SK-N-SH (cell line): ENCODE measurements at regions of chr3 and their contacts with region 1.

Region 1: DNA sequence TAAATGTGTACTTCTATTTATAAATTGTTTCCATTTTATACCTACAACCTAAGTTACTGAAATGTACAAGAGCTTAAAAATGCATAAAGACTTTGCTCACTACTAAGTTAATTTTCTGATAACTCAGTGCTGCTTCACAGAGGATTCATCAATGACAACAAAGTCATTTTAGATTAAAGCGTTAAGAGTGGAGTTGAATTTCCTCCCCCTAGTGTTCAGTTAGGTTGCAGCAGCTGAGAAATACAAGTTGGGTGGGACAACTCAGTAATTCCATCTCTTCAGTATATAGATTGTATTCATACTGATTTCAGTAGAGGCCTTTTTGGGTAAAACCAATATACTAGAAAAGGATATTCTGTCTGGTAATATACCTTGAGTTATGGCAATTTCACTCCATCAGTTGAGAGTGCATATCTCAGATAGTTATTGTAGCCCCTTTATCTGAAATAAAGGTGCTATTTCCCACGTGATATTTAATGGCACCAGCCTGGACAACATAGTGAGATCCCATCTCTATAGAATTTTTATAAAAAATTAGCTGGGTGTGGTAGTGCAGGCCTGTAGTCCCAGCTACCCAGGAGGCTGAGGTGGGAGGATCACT is 6.9 kb upstream of the RPL35A start:
- DNase-seq: peak; percentile 65
- H3K4me3 ChIP-seq: no peak overlapping the region; a peak in 1 of 4 replicates
- H3K27ac ChIP-seq: no peak overlapping the region
- H3K4me1 ChIP-seq: no peaks in the 10 kb centered on the region
- H3K27me3 ChIP-seq: no peaks in the 10 kb centered on the region
- CTCF ChIP-seq: peak; percentile 85
- EP300 ChIP-seq: no peak
- RAD21 ChIP-seq: peak; percentile 61

Region 2: GRCh38 chr3:197889204-197889930 is 53.7 kb before region 1 on chr3:
- CTCF ChIA-PET with region 1: interaction called, 14 read pairs
- POLR2A ChIA-PET with region 1: no interaction called
- DNase-seq: no peak
- H3K4me3 ChIP-seq: no peak overlapping the region
- H3K27ac ChIP-seq: no peak overlapping the region
- H3K4me1 ChIP-seq: no peaks in the 10 kb centered on the region
- H3K27me3 ChIP-seq: no peaks in the 10 kb centered on the region
- CTCF ChIP-seq: no peak
- EP300 ChIP-seq: no peak
- RAD21 ChIP-seq: no peak

Region 3: DNA sequence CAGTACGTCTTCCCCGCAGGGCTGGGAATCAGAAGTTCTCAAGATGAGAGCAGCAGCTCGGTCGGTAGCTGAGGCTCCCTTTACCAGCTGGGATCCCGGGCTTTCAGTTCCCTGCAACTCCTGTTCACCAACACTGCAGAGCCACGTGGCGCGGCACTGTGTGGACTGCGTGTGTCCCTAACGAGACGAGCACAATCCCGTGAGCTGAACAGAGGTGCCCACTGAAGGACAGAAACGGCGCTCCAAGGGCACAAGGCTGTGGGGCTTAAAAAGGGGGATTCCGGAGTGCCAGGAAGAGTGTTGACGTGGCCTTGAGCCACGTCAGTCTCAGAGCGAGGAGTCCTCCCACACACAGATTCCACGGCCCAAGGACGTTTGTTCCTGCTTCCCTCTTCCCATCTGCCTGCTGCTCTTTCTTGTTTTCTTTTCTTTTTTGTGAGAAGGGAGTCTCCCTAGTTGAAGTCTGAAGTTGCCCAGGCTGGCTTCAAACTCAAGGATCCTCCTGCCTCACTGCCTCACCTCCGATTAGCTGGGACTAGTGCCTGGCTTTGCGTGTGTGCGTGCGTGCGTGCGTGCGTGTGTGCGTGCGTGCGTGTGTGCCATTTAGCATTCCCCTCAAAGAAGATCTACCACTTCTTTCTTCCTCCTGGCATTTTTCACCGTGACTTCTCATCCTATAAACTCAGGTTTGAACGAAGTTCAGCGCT is 30.1 kb before region 1 on chr3:
- CTCF ChIA-PET with region 1: interaction called, 17 read pairs
- POLR2A ChIA-PET with region 1: no interaction called
- DNase-seq: no peak
- H3K4me3 ChIP-seq: no peak overlapping the region
- H3K27ac ChIP-seq: no peak overlapping the region
- H3K4me1 ChIP-seq: no peaks in the 10 kb centered on the region
- H3K27me3 ChIP-seq: no peaks in the 10 kb centered on the region
- CTCF ChIP-seq: no peak
- EP300 ChIP-seq: no peak
- RAD21 ChIP-seq: no peak

Region 4: DNA sequence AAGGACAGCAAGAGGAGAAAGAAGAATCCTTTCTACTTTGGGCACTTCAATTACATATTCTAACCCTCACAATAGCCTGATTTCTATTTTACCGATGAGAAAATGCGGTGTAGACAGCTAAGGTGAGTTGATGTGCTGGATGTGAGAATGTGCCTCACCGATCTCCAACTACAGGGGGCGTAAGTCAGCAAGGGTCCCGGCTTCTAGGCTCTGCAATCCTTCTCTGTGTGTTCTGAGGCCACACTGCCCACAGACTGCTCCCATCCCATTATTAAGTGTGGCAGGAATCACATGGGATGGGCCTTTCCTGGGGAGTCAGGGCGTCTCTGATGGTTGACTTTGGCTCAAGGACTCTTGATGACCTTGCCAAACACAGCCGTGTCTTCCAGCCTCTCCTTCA is 16.6 kb before region 1 on chr3:
- CTCF ChIA-PET with region 1: interaction called, 12 read pairs
- POLR2A ChIA-PET with region 1: no interaction called
- DNase-seq: no peak
- H3K4me3 ChIP-seq: no peak overlapping the region
- H3K27ac ChIP-seq: no peak overlapping the region
- H3K4me1 ChIP-seq: no peaks in the 10 kb centered on the region
- H3K27me3 ChIP-seq: no peaks in the 10 kb centered on the region
- CTCF ChIP-seq: peak; percentile 37; the same call in 1 of the 2 replicates
- EP300 ChIP-seq: no peak
- RAD21 ChIP-seq: no peak

Region 5: DNA sequence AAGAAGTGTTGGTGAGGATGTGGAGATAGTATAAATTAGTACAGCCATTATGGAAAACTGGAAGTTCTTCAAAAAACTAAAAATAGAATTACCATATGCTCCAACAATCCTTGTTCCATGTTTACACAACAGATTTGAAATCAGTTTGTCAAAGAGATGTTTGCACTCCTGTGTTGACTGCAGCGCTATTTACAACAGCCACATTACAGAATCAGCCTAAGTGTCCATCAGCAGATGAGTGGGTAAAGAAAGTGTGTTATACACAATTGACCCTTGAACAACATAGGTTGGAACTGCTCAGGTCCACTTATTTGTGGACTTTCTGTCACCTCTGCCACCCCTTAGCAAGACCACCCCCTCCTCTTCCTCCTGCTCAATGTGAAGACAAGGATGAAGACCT is 51.7 kb after region 1 on chr3:
- CTCF ChIA-PET with region 1: no interaction called
- POLR2A ChIA-PET with region 1: no interaction called
- DNase-seq: no peak
- H3K4me3 ChIP-seq: no peak overlapping the region
- H3K27ac ChIP-seq: no peak overlapping the region
- H3K4me1 ChIP-seq: no peaks in the 10 kb centered on the region
- H3K27me3 ChIP-seq: no peaks in the 10 kb centered on the region
- CTCF ChIP-seq: no peak
- EP300 ChIP-seq: no peak
- RAD21 ChIP-seq: no peak